ENCODE measurements at regions of chr12 and their contacts with region 1.

Region 1: GRCh38 chr12:55996715-55997534 is at the start of gene SUOX:
- DNase-seq: peak; percentile 46
- H3K4me3 Mint-ChIP-seq: peak within 1 kb of the TSS; percentile 66
- H3K27ac Mint-ChIP-seq: no peak within 1 kb of the TSS
- H3K4me1 Mint-ChIP-seq: peaks cover 38% of the 10 kb centered on the region
- H3K27me3 Mint-ChIP-seq: no peaks in the 10 kb centered on the region
- total RNA-seq, gene SUOX: 4.2 to 5.3 TPM

Region 2: DNA sequence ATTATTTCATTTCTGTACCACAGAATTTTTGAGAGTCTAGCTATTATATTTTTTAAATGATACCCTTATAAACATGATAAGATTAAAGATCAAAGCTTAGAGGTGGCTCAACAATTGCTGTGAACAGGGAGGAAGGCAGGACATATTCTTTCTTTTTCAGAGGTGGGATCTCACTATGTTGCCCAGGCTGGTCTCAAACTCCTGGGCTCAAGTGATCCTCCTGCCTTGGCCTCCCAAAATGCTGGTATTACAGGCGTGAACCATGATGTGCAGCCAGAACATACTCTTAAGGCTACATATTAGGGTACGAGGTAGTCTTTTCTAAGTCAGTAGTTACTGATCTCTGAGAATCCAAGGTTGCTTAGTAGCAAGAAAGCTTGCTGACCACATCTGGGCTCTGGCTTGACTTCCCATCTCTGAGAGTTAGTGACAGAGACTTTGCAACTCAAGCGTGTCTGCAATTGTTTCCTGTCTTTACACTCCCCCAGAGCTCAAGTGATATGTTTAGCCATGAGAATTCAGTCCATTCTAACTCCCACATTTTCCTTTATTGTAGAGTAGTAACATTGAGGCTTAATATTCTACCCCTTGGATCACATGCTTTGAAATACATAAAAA is 14.5 kb before region 1 on chr12:
- CTCF ChIA-PET with region 1: interaction called, 32 read pairs
- POLR2A ChIA-PET with region 1: interaction called, 5 read pairs
- DNase-seq: no peak
- H3K4me3 Mint-ChIP-seq: no peak overlapping the region
- H3K27ac Mint-ChIP-seq: no peak overlapping the region
- H3K4me1 Mint-ChIP-seq: peaks cover 5% of the 10 kb centered on the region
- H3K27me3 Mint-ChIP-seq: no peaks in the 10 kb centered on the region

Region 3: GRCh38 chr12:56007564-56008559 is 10.9 kb after region 1 on chr12:
- CTCF ChIA-PET with region 1: interaction called, 20 read pairs
- POLR2A ChIA-PET with region 1: interaction called, 3 read pairs
- DNase-seq: peak; percentile 73
- H3K4me3 Mint-ChIP-seq: peak overlapping the region; percentile 86
- H3K27ac Mint-ChIP-seq: peak overlapping the region; percentile 74
- H3K4me1 Mint-ChIP-seq: peaks cover 29% of the 10 kb centered on the region
- H3K27me3 Mint-ChIP-seq: no peaks in the 10 kb centered on the region

Region 4: DNA sequence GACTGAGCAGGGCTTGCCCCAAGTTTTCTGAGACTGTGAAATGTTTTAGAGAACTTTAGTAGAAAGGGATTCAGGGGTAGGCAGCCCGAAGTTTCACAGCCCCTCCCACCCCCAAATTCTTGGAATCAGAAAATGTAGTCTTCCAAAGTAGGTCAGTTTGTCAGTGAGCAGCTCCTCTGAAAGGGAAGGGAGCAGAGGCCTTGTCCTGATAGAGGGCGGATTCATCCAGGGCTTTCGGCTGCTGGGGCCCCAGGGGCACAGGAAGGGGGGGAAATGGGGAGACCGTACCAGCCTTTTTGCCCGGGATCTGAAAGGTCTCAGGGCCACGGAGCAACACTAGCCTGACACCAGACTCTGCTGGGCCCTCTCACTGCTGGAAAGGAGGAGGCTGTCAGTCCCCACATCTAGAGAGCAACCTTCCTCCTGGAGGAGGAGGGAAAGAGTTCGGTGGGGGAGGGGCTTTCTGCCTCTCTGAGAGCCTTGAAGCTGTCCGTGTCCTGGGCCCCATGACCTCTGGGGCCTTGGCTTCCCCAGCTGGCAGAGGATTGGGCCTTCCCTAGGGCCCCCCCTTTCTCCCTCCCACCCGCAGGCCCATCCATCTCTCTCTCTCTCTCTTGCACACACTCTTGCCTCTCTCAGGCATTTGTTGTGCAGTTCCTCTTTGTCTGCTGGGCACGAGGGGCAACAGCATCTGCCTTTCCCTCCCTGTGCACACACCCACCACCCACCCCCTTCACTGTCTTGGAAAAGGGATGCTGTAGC is 23.7 kb after region 1 on chr12 and contains the start of gene IKZF4:
- CTCF ChIA-PET with region 1: interaction called, 32 read pairs
- POLR2A ChIA-PET with region 1: interaction called, 8 read pairs
- DNase-seq: peak; percentile 32
- H3K4me3 Mint-ChIP-seq: peak within 1 kb of the TSS; percentile 98
- H3K27ac Mint-ChIP-seq: peak within 1 kb of the TSS; percentile 94
- H3K4me1 Mint-ChIP-seq: peaks cover 55% of the 10 kb centered on the region
- H3K27me3 Mint-ChIP-seq: no peaks in the 10 kb centered on the region
- total RNA-seq, gene IKZF4: 17.6 to 19.4 TPM

Region 5: GRCh38 chr12:56029666-56030293 is 32.9 kb after region 1 on chr12:
- CTCF ChIA-PET with region 1: interaction called, 98 read pairs
- POLR2A ChIA-PET with region 1: interaction called, 17 read pairs
- DNase-seq: peak; percentile 52
- H3K4me3 Mint-ChIP-seq: no peak overlapping the region
- H3K27ac Mint-ChIP-seq: peak overlapping the region; percentile 21
- H3K4me1 Mint-ChIP-seq: peaks cover 53% of the 10 kb centered on the region
- H3K27me3 Mint-ChIP-seq: no peaks in the 10 kb centered on the region

Region 6: GRCh38 chr12:56041552-56042429 is 44.9 kb after region 1 on chr12 and contains the start of gene RPS26:
- CTCF ChIA-PET with region 1: interaction called, 61 read pairs
- POLR2A ChIA-PET with region 1: interaction called, 7 read pairs
- DNase-seq: peak; percentile 94
- H3K4me3 Mint-ChIP-seq: peak within 1 kb of the TSS; percentile 100
- H3K27ac Mint-ChIP-seq: peak within 1 kb of the TSS; percentile 99
- H3K4me1 Mint-ChIP-seq: peaks cover 60% of the 10 kb centered on the region
- H3K27me3 Mint-ChIP-seq: no peaks in the 10 kb centered on the region
- total RNA-seq, gene RPS26: 30.4 to 35.0 TPM

Region 7: GRCh38 chr12:56274299-56274698 is 277.4 kb after region 1 on chr12:
- CTCF ChIA-PET with region 1: no interaction called
- POLR2A ChIA-PET with region 1: no interaction called
- DNase-seq: no peak
- H3K4me3 Mint-ChIP-seq: no peak overlapping the region
- H3K27ac Mint-ChIP-seq: no peak overlapping the region
- H3K4me1 Mint-ChIP-seq: no peaks in the 10 kb centered on the region
- H3K27me3 Mint-ChIP-seq: no peaks in the 10 kb centered on the region

Region 8: GRCh38 chr12:56468216-56469006 is 471.5 kb after region 1 on chr12 and contains the start of gene SPRYD4:
- CTCF ChIA-PET with region 1: no interaction called
- POLR2A ChIA-PET with region 1: no interaction called
- DNase-seq: peak; percentile 96
- H3K4me3 Mint-ChIP-seq: peak within 1 kb of the TSS; percentile 94
- H3K27ac Mint-ChIP-seq: peak within 1 kb of the TSS; percentile 94
- H3K4me1 Mint-ChIP-seq: peaks cover 29% of the 10 kb centered on the region
- H3K27me3 Mint-ChIP-seq: no peaks in the 10 kb centered on the region
- total RNA-seq, gene SPRYD4: 2.9 to 3.1 TPM

Measured in activated CD4-positive, alpha-beta memory T cell treated with anti-CD3 and anti-CD28 coated beads, Interleukin-2, amount 10 ng/mL, durations not matched to agents 7 days and 5 days (primary cell).